ENCODE measurements at regions of chr1 and their contacts with region 1.

Region 1: DNA sequence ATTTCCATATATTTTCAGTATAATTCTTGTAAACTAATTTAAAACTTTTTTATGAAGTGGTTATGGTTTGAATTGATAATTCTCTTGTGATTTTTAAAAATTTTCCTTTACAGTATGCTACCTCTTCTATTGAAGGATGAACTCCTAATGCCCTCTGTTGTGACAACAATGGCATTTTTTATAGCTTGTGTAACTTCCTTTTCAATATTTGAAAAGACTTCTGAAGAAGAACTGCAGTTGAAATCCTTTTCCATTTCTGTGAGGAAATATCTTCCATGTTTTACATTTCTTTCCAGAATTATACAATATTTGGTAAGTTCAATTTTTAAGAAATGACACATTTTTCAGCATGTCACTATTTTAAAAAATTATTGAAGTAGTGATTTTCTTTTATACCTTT is 61.4 kb downstream of the ALG6 start:
- DNase-seq: no peak
- H3K4me3 ChIP-seq: no peak overlapping the region
- H3K27ac ChIP-seq: no peak overlapping the region
- H3K4me1 ChIP-seq: no peaks in the 10 kb centered on the region
- H3K27me3 ChIP-seq: no peaks in the 10 kb centered on the region
- CTCF ChIP-seq: no peak

Region 2: DNA sequence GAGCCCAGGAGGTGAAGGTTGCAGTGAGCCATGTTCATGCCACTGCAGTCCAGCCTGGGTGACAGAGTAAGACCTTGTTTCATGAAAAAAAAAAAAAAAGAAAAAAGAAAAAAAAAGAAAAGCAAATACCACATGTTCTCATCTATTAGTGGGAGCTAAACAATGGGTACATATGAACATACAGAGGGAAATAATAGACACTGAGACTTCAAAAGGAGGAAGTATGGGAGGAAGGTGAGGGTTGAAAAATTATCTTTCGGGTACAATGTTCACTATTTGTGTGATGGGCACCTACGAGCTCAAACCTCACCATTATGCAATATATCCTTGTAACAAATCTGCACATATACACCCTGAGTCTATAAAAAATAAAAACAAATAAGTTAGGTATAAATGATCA is 87.8 kb after region 1 on chr1:
- CTCF ChIA-PET with region 1: interaction called, 13 read pairs
- POLR2A ChIA-PET with region 1: no interaction called
- intact Hi-C with region 1: no loop called
- DNase-seq: no peak
- H3K4me3 ChIP-seq: no peak overlapping the region
- H3K27ac ChIP-seq: no peak overlapping the region
- H3K4me1 ChIP-seq: peaks cover 4% of the 10 kb centered on the region
- H3K27me3 ChIP-seq: no peaks in the 10 kb centered on the region
- CTCF ChIP-seq: no peak

Region 3: GRCh38 chr1:63739452-63739851 is 310.6 kb after region 1 on chr1:
- CTCF ChIA-PET with region 1: no interaction called
- POLR2A ChIA-PET with region 1: no interaction called
- intact Hi-C with region 1: no loop called
- DNase-seq: no peak
- H3K4me3 ChIP-seq: no peak overlapping the region
- H3K27ac ChIP-seq: no peak overlapping the region
- H3K4me1 ChIP-seq: no peaks in the 10 kb centered on the region
- H3K27me3 ChIP-seq: no peaks in the 10 kb centered on the region
- CTCF ChIP-seq: no peak

Measured in PC-9 (cell line).